Esophagus muscularis mucosa (tissue), 4 donors: ENCODE measurements at regions of chr2 and their contacts with region 1.

Region 1: GRCh38 chr2:199739413-199740110 is 111.4 kb downstream of the FTCDNL1 start:
- DNase-seq: no peak
- H3K4me3 ChIP-seq: peak overlapping the region in 1 of 4 donors; percentile 15
- H3K27ac ChIP-seq: no peak overlapping the region
- H3K4me1 ChIP-seq: peaks cover 0 to 9% (median 8%) of the 10 kb centered on the region in 4 donors
- H3K27me3 ChIP-seq: no peaks in the 10 kb centered on the region
- CTCF ChIP-seq: peak; percentile 79 to 91 (median 90)
- EP300 ChIP-seq: no peak
- POLR2A ChIP-seq: no peak

Region 2: DNA sequence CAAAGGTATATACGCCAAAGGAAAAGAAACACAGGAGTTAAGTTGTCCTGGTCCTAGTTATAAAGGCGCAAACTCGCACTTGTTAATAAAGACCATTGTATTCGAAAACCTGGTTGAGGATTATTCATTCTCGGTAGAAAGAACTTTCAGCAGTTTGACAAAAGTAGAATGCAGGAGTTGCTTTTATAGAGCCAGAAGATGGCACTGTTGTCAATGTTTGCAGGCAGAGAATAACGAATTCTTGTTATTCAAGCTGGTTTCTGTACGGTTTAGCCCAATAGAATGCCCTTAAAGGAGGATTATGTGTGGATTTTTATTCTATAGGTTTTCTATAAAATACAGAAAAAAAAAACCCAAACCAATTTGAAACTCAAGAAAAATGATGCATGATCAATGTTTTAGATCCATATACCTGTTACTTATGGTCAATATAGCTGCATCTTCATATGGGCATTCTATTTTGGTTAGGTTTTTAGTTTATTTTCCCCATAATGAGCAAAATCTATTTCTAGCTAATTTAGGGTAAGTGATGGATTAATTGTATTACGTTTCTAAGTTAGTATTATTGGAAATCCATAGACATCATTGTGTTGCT is 1424.9 kb before region 1 on chr2:
- intact Hi-C with region 1: loop called (anchors 5 kb)
- DNase-seq: no peak
- H3K4me3 ChIP-seq: no peak overlapping the region
- H3K27ac ChIP-seq: no peak overlapping the region
- H3K4me1 ChIP-seq: no peaks in the 10 kb centered on the region
- H3K27me3 ChIP-seq: peaks cover 0 to 22% (median 0%) of the 10 kb centered on the region in 4 donors
- CTCF ChIP-seq: peak; percentile 35 to 63 (median 41)
- EP300 ChIP-seq: no peak
- POLR2A ChIP-seq: no peak